Right ventricle myocardium superior (tissue), 1 donor: ENCODE measurements at regions of chr15 and their contacts with region 1.

Region 1: DNA sequence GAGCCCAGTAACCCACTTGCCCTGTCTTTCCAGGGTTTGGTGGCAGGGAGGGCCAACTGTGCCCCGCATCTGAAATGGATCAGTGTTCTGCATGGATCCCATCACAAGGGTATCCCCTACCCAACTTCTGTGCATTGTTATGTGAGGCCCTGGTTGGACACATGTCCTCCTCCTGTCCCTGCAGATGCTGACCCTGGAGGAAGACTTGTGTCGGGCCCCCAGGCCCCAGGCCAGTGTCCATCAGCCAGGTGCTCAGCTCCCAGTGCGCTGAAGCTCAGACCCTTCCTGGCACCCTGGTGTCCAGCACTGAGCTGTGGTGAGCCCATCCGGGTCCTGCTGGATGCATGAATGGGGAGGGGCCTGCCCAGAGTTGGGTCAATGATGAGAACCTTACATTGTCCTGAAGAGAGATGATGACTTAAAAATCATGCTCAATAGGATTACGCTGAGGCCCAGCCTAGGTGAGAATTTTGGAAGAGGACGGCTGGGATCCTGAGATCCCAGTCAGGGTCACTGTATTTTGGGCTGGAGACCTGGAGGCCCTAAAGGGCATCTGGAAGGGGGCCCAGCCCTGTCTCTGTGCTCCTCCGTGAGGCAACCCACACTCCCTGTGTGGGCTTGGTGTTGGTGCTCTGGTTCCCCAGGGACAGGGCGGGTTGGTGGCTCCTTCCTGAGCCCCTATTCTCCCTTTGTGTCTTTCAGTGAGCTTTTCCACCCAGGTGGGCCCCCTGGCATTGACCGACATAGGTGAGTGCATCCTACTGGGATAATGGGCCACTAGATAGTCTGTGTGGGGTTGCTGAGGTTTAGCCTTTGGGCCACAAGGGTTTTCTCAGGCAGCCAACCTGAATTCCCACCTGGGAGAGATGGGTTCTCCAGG is 199.1 kb downstream of the UBE3A start:
- DNase-seq: peak; percentile 20
- ATAC-seq: no peak

Region 2: GRCh38 chr15:25176991-25177954 is 62.4 kb before region 1 on chr15:
- intact Hi-C with region 1: loop called (anchors 10 kb)
- DNase-seq: peak; percentile 10
- ATAC-seq: no peak

Region 3: DNA sequence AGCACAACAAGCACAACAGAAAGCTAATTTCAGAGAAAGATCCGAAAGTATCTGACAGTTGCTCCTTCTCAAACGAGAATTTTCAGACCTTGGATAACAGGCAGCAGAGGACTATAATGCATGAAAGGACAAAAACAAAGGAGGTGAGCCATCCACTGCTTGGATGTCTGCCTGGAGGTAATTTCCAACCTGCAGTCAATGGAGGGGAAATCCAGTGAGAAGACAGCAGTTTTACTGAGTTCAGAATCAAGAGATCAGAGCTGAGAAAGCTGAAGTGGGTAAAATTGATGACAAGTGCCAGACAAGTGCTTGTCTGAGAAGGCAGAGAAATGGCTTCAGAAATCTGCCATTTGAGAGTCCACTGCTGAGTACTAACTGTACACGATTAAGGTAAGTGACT is 177.0 kb after region 1 on chr15:
- intact Hi-C with region 1: no loop called
- DNase-seq: no peak
- ATAC-seq: no peak